ENCODE measurements at regions of chrX and their contacts with region 1.

Region 1: DNA sequence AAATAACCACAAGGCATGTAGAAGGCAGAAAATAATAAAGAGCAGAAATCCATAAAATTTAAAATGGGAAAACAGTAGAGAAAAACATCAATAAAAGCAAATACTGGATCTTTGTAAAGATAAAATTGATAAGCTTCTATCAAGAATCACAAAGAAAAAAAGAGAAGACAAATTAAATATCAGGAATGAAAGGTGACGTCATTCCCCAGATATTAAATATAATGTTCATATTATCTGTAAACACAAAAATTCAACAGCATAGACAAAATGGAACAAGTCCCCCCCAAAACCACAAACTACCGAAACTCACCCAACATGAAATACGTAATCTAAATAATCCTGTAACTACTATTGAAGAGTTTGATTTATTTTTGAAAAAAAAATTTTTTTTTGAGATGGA is 30.5 kb upstream of the FAM120C start:
- DNase-seq: no peak
- H3K4me3 ChIP-seq: no peak overlapping the region
- H3K27ac ChIP-seq: no peak overlapping the region
- H3K4me1 ChIP-seq: no peaks in the 10 kb centered on the region
- H3K27me3 ChIP-seq: no peaks in the 10 kb centered on the region
- CTCF ChIP-seq: no peak

Region 2: DNA sequence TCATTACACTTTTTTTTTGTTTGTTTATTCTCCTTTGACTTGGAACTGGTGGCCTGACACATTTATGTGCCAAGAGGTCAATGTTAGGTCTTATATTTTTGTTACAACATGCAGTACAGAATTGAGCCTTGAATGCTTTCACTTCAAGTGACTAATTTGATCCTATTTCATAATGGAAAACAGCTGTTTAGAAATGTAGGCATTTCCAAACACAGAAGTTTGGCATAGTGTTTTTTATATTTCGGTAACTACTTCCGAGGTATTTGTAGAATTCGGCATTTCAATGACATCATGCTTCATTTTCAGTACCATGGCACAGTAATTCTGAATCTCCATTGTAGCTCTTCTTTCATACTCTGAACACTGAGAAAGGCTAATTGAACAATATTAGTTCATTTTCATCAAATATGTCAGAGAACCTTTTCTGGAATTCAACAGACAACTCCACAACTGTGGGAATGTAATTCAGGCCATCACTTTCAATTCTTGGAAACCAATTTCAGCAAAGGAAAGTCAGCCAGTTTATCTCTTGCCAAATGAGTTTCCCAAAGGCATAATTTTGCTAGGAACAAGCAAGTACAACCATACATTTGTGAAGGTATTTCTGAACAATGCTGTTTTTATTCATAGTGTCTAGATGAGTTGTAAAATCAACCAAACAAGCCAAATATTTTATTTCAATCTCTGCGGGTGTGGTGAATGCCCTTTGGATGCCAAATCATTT is 41.9 kb before region 1 on chrX:
- CTCF ChIA-PET with region 1: no interaction called
- POLR2A ChIA-PET with region 1: no interaction called
- intact Hi-C with region 1: no loop called
- DNase-seq: no peak
- H3K4me3 ChIP-seq: no peak overlapping the region
- H3K27ac ChIP-seq: no peak overlapping the region
- H3K4me1 ChIP-seq: no peaks in the 10 kb centered on the region
- H3K27me3 ChIP-seq: no peaks in the 10 kb centered on the region
- CTCF ChIP-seq: no peak

Region 3: DNA sequence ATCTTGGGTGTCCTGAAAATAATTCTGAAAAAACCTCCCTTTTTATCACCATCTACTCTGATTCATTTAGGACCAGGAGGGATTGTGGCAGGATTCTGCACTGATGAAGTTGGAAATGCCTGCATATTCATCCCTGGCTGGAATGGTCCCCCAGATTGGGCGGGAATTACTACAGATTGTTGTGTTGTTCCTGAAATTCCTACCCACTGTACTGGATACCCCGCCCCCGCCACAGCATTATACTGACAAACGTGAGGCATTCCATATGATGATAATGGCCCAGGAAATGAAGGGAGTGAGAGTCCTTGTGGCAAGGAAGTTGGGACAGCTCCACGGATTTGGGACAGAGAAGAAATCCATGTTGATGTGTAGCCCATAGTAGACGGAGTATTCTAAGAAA is 15.3 kb before region 1 on chrX:
- CTCF ChIA-PET with region 1: no interaction called
- POLR2A ChIA-PET with region 1: interaction called, 14 read pairs
- intact Hi-C with region 1: no loop called
- DNase-seq: no peak
- H3K4me3 ChIP-seq: no peak overlapping the region
- H3K27ac ChIP-seq: no peak overlapping the region
- H3K4me1 ChIP-seq: no peaks in the 10 kb centered on the region
- H3K27me3 ChIP-seq: no peaks in the 10 kb centered on the region
- CTCF ChIP-seq: no peak